Activated CD8-positive, alpha-beta T cell treated with anti-CD3 and anti-CD28 coated beads for 36 hours (primary cell): ENCODE measurements at regions of chr17 and their contacts with region 1.

Region 1: DNA sequence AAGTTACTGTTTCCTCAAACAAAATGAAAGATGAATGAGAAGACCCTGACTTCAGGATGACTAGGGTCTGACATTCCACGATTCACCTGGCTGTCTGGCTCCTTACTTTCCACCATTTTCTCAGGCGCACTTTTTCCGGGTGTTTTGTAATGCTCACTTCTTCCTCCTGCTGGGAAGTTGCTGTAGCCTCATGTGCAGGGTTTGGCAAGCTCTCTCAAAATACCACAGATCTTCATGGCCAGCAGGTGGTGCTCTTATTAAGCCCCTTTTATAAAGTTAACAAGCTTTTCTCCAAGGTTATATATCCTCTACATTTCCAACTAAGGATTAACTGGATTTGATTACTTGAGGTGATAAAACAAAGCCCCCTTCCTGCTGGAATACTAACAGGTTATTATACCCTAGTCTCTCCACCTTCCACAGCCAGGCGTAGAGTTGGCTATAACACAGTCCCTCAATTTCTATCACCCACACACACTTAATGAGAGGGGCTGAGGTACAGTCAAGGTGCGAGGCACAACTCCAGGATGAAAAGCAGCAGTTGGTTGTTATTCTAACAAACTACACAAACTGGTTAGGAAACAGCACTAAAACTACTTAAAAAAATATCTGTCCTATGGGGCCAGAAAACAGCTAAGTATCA is 45.4 kb downstream of the STH start:
- DNase-seq: peak; percentile 75
- ATAC-seq: peak; percentile 52
- H3K4me3 Mint-ChIP-seq: no peak overlapping the region
- H3K27ac Mint-ChIP-seq: peak overlapping the region; percentile 71
- H3K4me1 Mint-ChIP-seq: peaks cover 31% of the 10 kb centered on the region
- H3K27me3 Mint-ChIP-seq: no peaks in the 10 kb centered on the region
- CTCF ChIP-seq: peak; percentile 76

Region 2: DNA sequence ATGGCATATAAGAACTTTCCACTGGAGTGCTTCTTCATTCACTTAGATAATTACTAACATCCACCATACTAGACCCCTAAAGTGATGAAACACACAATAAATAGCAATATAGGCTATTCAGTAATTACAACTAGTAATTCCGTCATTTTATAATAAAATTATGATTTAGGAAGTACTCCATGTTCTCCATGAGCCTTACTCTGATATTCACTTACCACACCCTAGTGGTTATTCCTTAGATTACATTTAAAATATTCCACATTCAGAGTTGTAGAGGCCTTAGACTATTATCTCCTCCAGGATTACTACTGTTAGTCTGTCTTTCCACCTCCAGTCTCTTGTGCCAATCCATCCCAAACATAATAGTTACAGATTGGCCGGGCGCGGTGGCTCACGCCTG is 17.0 kb after region 1 on chr17:
- CTCF ChIA-PET with region 1: interaction called, 42 read pairs
- POLR2A ChIA-PET with region 1: interaction called, 4 read pairs
- intact Hi-C with region 1: no loop called
- DNase-seq: no peak
- ATAC-seq: no peak
- H3K4me3 Mint-ChIP-seq: no peak overlapping the region
- H3K27ac Mint-ChIP-seq: no peak overlapping the region
- H3K4me1 Mint-ChIP-seq: peaks cover 38% of the 10 kb centered on the region
- H3K27me3 Mint-ChIP-seq: no peaks in the 10 kb centered on the region
- CTCF ChIP-seq: peak; percentile 54

Region 3: DNA sequence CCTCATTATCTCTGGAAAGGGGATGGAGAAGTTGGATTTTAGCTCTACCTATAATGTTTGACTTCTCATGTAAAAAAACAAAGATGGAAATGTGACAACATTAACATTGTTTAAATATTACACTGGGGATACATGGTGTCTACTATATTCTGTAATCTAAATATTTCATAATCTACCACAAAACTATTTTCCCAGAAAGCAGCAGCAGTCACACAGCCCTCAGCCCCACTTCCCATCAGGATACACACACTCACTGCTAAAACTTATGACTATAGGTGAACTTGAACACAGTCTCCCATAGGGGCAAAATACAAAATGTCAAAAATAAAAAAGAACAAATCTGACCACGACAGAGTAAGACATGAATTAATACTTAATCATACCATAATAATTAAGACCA is 53.1 kb after region 1 on chr17:
- CTCF ChIA-PET with region 1: interaction called, 9 read pairs
- POLR2A ChIA-PET with region 1: no interaction called
- intact Hi-C with region 1: loop called (anchors 10 kb)
- DNase-seq: no peak
- ATAC-seq: no peak
- H3K4me3 Mint-ChIP-seq: no peak overlapping the region
- H3K27ac Mint-ChIP-seq: no peak overlapping the region
- H3K4me1 Mint-ChIP-seq: peaks cover 64% of the 10 kb centered on the region
- H3K27me3 Mint-ChIP-seq: no peaks in the 10 kb centered on the region
- CTCF ChIP-seq: no peak

Region 4: DNA sequence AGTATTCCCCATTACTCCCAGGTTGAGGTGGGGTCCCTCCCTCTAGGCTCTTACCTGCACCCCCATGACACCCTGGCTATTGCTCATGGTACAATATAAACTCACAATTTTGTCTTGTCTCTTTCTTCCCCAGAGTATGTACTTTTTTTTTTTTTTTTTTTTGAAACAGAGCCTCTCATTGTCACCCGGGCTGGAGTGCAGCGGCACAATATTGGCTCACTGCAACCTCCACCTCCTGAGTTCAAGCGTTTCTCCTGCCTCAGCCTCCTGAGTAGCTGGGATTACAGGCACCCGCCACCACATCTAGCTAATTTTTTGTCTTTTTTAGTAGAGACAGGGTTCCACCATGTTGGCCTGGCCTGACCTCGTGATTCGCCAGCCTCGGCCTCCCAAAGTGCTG is 140.3 kb after region 1 on chr17:
- CTCF ChIA-PET with region 1: interaction called, 35 read pairs
- POLR2A ChIA-PET with region 1: no interaction called
- intact Hi-C with region 1: no loop called
- DNase-seq: no peak
- ATAC-seq: no peak
- H3K4me3 Mint-ChIP-seq: peak overlapping the region; percentile 4
- H3K27ac Mint-ChIP-seq: peak overlapping the region; percentile 44
- H3K4me1 Mint-ChIP-seq: peaks cover 73% of the 10 kb centered on the region
- H3K27me3 Mint-ChIP-seq: no peaks in the 10 kb centered on the region
- CTCF ChIP-seq: no peak

Region 5: GRCh38 chr17:46212634-46213435 is 168.4 kb after region 1 on chr17:
- CTCF ChIA-PET with region 1: interaction called, 46 read pairs
- POLR2A ChIA-PET with region 1: no interaction called
- intact Hi-C with region 1: no loop called
- DNase-seq: peak; percentile 74
- ATAC-seq: peak; percentile 73
- H3K4me3 Mint-ChIP-seq: no peak overlapping the region
- H3K27ac Mint-ChIP-seq: peak overlapping the region; percentile 4
- H3K4me1 Mint-ChIP-seq: peaks cover 23% of the 10 kb centered on the region
- H3K27me3 Mint-ChIP-seq: no peaks in the 10 kb centered on the region
- CTCF ChIP-seq: peak; percentile 87